Sciatic nerve (tissue), 2 donors: ENCODE measurements at regions of chr9 and their contacts with region 1.

Region 1: DNA sequence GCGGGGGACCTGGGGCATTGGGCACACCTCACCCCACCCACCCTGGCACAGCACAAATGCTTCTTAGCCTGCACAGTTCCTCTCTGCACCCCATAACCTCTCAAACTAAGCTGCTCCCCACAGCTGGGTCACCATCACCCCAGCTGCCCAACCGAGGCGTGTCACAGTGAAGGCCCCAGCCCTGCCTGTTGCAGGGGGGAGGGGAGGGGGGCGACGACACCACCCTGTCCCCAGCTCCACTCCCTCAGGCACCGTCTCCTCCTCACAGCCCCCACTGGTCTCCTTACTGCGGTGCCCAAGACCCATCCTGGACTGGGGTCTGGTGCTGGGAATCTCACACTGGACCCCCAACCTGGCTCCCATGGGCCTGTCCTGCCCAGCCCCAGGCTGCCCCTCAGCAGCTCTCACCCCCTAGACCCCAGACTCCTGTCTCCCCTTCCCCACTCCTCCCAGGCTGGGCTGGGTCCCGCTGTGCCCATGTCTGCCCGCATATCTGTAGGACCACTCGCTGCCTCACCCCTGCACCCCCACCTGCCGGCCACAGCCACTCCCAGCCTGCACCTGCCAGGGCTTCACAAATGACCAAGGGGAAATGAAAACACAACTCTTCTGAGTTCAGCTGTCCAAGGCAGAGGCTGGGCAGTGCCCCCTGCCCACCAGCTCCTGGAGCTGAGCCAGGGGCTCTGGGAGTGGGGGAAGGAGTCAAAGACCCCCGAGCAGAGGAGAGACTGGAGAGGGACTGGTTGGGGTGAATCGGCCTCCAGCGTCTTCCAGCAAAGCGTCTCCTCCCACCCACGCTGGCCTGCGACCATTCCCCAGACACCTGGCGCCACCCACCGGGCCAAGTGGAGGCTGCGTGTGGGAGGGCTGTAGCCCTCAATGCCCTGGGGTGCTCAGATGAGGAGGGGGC is 32.7 kb upstream of the EGFL7 start:
- DNase-seq: peak; percentile 74
- ATAC-seq: peak; percentile 64

Region 2: GRCh38 chr9:136485049-136486045 is 144.7 kb before region 1 on chr9:
- intact Hi-C with region 1: loop called (anchors 2 kb)
- DNase-seq: peak; percentile 91
- ATAC-seq: peak; percentile 31

Region 3: GRCh38 chr9:136539427-136540421 is 90.3 kb before region 1 on chr9:
- intact Hi-C with region 1: loop called (anchors 5 kb)
- DNase-seq: peak; percentile 91
- ATAC-seq: peak; percentile 50